HepG2 (cell line): ENCODE measurements at regions of chr3 and their contacts with region 1.

Region 1: GRCh38 chr3:49358217-49358883 is at the start of gene GPX1:
- DNase-seq: peak; percentile 92
- ATAC-seq: peak; percentile 93
- H3K4me3 ChIP-seq: peak within 1 kb of the TSS; percentile 62 to 73 (median 63)
- H3K27ac ChIP-seq: peak within 1 kb of the TSS; percentile 94
- H3K4me1 ChIP-seq: peaks cover 37% of the 10 kb centered on the region
- H3K27me3 ChIP-seq: no peaks in the 10 kb centered on the region
- CTCF ChIP-seq: peak; percentile 32; the same call in 1 of the 2 replicates
- EP300 ChIP-seq: no peak
- POLR2A ChIP-seq: peak; percentile 86
- RAD21 ChIP-seq: peak; percentile 32; the same call in 1 of the 2 replicates
- total RNA-seq, gene GPX1: 149 and 169 TPM in 2 replicates

Region 2: GRCh38 chr3:49377483-49377882 is 19.1 kb after region 1 on chr3:
- CTCF ChIA-PET with region 1: no interaction called
- POLR2A ChIA-PET with region 1: interaction called, 15 read pairs
- in situ Hi-C with region 1: no loop called
- intact Hi-C with region 1: no loop called
- DNase-seq: no peak
- ATAC-seq: no peak
- H3K4me3 ChIP-seq: no peak overlapping the region
- H3K27ac ChIP-seq: no peak overlapping the region
- H3K4me1 ChIP-seq: peaks cover 49% of the 10 kb centered on the region
- H3K27me3 ChIP-seq: no peaks in the 10 kb centered on the region
- CTCF ChIP-seq: no peak
- EP300 ChIP-seq: no peak
- POLR2A ChIP-seq: no peak
- RAD21 ChIP-seq: no peak

Region 3: DNA sequence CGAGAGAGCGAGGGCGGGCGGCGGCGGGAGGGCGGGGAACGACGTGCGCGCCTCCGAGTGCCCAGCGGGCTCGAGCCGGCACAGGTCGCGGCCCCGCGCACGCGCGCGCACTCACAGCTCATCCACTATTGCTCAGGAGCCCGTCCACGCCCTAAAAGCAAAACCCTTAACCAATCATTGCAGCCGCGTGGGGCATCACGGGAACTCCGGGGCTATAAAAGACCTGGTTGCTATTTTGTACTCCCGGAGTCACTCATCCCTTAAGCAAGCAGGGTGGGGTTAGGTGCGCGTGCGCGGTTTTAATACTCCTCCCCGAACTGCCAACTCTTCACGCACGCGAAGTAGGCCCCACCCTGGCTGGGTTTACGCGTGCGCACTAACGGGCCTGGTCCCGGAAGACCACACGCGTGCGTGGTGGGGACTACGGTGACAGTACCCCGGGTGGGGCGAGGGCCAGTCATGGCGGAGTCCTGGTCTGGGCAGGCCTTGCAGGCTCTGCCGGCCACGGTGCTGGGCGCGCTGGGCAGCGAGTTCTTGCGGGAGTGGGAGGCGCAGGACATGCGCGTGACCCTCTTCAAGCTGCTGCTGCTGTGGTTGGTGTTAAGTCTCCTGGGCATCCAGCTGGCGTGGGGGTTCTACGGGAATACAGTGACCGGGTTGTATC is 53.8 kb after region 1 on chr3 and contains the starts of genes RHOA and TCTA:
- CTCF ChIA-PET with region 1: no interaction called
- POLR2A ChIA-PET with region 1: interaction called, 32 read pairs
- in situ Hi-C with region 1: no loop called
- intact Hi-C with region 1: loop called (anchors 5 kb)
- DNase-seq: peak; percentile 99
- ATAC-seq: peak; percentile 90
- H3K4me3 ChIP-seq: peak within 1 kb of the TSS; percentile 81 to 93 (median 90)
- H3K27ac ChIP-seq: peak within 1 kb of the TSS; percentile 91
- H3K4me1 ChIP-seq: peaks cover 47% of the 10 kb centered on the region
- H3K27me3 ChIP-seq: no peaks in the 10 kb centered on the region; a peak in 1 of 5 replicates
- CTCF ChIP-seq: peak; percentile 32; the same call in 1 of the 2 replicates
- EP300 ChIP-seq: no peak; a peak in 1 of 4 replicates
- POLR2A ChIP-seq: peak; percentile 96 to 99
- RAD21 ChIP-seq: peak; percentile 30; the same call in 1 of the 2 replicates
- total RNA-seq, gene RHOA: 177 and 258 TPM in 2 replicates
- total RNA-seq, gene TCTA: 6.7 and 8.3 TPM in 2 replicates

Region 4: GRCh38 chr3:49422379-49423248 is 64.3 kb after region 1 on chr3 and contains the start of gene AMT:
- CTCF ChIA-PET with region 1: no interaction called
- POLR2A ChIA-PET with region 1: interaction called, 17 read pairs
- in situ Hi-C with region 1: no loop called
- intact Hi-C with region 1: no loop called
- DNase-seq: peak; percentile 83
- ATAC-seq: peak; percentile 91
- H3K4me3 ChIP-seq: peak within 1 kb of the TSS; percentile 60 to 89 (median 64)
- H3K27ac ChIP-seq: peak within 1 kb of the TSS; percentile 89
- H3K4me1 ChIP-seq: peaks cover 55% of the 10 kb centered on the region
- H3K27me3 ChIP-seq: no peaks in the 10 kb centered on the region
- CTCF ChIP-seq: peak; percentile 30; the same call in 1 of the 2 replicates
- EP300 ChIP-seq: peak in 1 of 2 experiments; percentile 47; a peak in 2 of 4 replicates
- POLR2A ChIP-seq: peak; percentile 61 to 75; a peak in 2 of 4 replicates
- RAD21 ChIP-seq: no peak; the same call in 1 of the 2 replicates
- total RNA-seq, gene AMT: 32.5 and 35.3 TPM in 2 replicates

Region 5: GRCh38 chr3:49428697-49429100 is 70.3 kb after region 1 on chr3:
- CTCF ChIA-PET with region 1: no interaction called
- POLR2A ChIA-PET with region 1: interaction called, 15 read pairs
- in situ Hi-C with region 1: no loop called
- intact Hi-C with region 1: no loop called
- DNase-seq: no peak
- ATAC-seq: peak; percentile 24
- H3K4me3 ChIP-seq: peak overlapping the region; percentile 72 to 89 (median 87)
- H3K27ac ChIP-seq: peak overlapping the region; percentile 90
- H3K4me1 ChIP-seq: peaks cover 43% of the 10 kb centered on the region
- H3K27me3 ChIP-seq: no peaks in the 10 kb centered on the region; a peak in 2 of 5 replicates
- CTCF ChIP-seq: peak; percentile 10
- EP300 ChIP-seq: no peak
- POLR2A ChIP-seq: no peak
- RAD21 ChIP-seq: no peak